Dorsolateral prefrontal cortex (tissue), 120 donors: ENCODE measurements at regions of chr12 and their contacts with region 1.

Region 1: DNA sequence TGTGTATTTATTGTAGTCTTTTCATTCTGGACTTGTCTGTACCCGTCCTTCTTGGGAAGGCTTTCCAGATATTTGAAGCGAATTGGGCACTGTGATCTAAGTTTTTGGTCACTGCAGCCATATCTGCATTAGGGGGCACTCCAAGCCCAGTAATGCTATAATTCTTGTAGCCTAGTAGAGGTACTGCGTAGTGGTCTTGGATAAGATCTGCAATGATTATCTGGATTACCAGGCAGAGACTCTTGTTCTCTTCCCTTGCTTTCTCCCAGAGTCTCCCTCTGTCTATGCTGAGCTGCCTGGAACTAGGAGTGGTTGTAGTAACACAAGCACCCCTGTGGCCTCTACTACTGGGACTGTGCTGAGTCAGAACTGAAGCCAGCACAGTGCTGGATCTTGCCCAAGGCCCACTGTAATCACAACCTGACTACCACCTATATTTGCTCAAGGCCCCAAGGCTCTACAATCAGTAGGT is 30.0 kb downstream of the SLC38A2 start:
- DNase-seq: peak in 3 of 10 donors; percentile 4 to 30 (median 24)
- H3K4me3 ChIP-seq: no peak overlapping the region
- H3K27ac ChIP-seq: no peak overlapping the region
- H3K27me3 ChIP-seq: no peaks in the 10 kb centered on the region
- CTCF ChIP-seq: peak in 55 of 56 donors; percentile 33 to 80 (median 58)

Region 2: GRCh38 chr12:46661110-46661845 is 318.7 kb after region 1 on chr12:
- intact Hi-C with region 1: loop called in 1 of 2 experiments (anchors 10 kb)
- DNase-seq: no peak
- H3K4me3 ChIP-seq: no peak overlapping the region
- H3K27ac ChIP-seq: peak overlapping the region in 6 of 59 donors; percentile 9 to 66 (median 39)
- H3K27me3 ChIP-seq: no peaks in the 10 kb centered on the region
- CTCF ChIP-seq: peak; percentile 47 to 81 (median 71)

Region 3: DNA sequence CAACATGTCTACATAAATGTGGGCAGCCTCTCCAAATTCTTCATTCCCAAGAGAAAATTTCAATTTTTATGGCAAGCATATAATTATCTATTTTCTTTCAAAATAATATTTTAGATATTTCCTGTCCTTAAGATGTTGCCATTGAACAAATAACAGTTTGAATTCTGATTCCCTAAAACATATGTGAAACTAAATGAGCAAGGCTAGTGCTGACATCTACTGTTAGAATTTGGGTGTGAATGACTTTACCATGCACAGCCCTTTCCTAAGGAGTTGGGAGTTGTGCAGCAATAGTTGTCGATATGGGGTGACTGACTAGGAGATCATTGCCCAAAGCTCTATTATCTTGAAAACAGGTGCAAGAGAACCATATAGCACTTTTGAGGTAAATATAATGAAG is 591.3 kb after region 1 on chr12:
- intact Hi-C with region 1: loop called in 1 of 2 experiments (anchors 10 kb)
- DNase-seq: no peak
- H3K4me3 ChIP-seq: no peak overlapping the region
- H3K27ac ChIP-seq: no peak overlapping the region
- H3K27me3 ChIP-seq: no peaks in the 10 kb centered on the region
- CTCF ChIP-seq: peak in 55 of 56 donors; percentile 24 to 79 (median 53)

Region 4: DNA sequence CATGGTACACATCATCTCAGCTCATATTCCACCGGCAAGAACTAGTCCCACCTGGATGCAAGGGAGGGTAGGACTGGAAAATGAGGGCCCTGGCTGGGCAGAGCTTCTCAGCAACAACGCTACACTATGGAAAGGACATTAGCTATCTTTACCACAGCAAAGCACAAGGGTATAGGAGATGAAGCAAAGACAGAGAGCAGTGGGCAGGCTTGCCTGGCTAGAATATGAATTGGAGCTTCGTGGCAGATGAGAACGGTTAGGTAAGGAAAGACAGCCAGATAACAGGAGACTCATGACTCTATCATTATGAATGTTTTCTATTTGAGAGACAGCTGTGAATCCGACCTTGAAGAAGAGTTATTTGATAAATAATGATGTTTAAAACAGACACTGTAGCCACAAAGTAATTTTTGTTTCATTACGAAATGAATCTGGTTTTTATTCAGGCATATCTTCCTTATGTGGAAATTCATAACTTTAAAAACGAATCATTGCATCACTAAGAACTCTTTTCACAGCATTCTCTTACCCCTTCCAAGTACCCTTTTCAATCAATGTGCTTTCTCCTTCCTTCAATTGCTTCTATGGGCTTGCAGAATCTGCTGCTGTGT is 677.7 kb after region 1 on chr12:
- intact Hi-C with region 1: loop called in 1 of 2 experiments (anchors 1 kb)
- DNase-seq: no peak
- H3K4me3 ChIP-seq: no peak overlapping the region
- H3K27ac ChIP-seq: no peak overlapping the region
- H3K27me3 ChIP-seq: peaks cover 0 to 4% (median 0%) of the 10 kb centered on the region in 45 donors
- CTCF ChIP-seq: no peak